ENCODE measurements at regions of chr9 and their contacts with region 1.

Region 1: GRCh38 chr9:37870799-37871176 is 33.1 kb downstream of the SLC25A51 start:
- DNase-seq: no peak
- H3K4me3 ChIP-seq: no peak overlapping the region
- H3K27ac ChIP-seq: no peak overlapping the region
- H3K4me1 ChIP-seq: no peaks in the 10 kb centered on the region
- H3K27me3 ChIP-seq: no peaks in the 10 kb centered on the region
- CTCF ChIP-seq: no peak
- EP300 ChIP-seq: no peak
- POLR2A ChIP-seq: no peak
- RAD21 ChIP-seq: no peak

Region 2: GRCh38 chr9:37859043-37859442 is 11.7 kb before region 1 on chr9:
- CTCF ChIA-PET with region 1: interaction called, 10 read pairs
- POLR2A ChIA-PET with region 1: no interaction called
- DNase-seq: no peak
- H3K4me3 ChIP-seq: no peak overlapping the region
- H3K27ac ChIP-seq: no peak overlapping the region
- H3K4me1 ChIP-seq: no peaks in the 10 kb centered on the region
- H3K27me3 ChIP-seq: no peaks in the 10 kb centered on the region
- CTCF ChIP-seq: peak in 1 of 3 experiments; percentile 3; a peak in 2 of 4 replicates
- EP300 ChIP-seq: no peak
- POLR2A ChIP-seq: no peak
- RAD21 ChIP-seq: peak; percentile 33 to 39

Measured in H1 (cell line).